Activated B cell treated with CpG ODN at 0.5 μM for 24 hours (primary cell): ENCODE measurements at regions of chr5 and their contacts with region 1.

Region 1: GRCh38 chr5:16616536-16617273 is at the start of gene RETREG1:
- DNase-seq: peak; percentile 67
- ATAC-seq: peak; percentile 85
- H3K4me3 Mint-ChIP-seq: peak within 1 kb of the TSS; percentile 84
- H3K27ac Mint-ChIP-seq: peak within 1 kb of the TSS; percentile 64
- H3K4me1 Mint-ChIP-seq: peaks cover 12% of the 10 kb centered on the region
- H3K27me3 Mint-ChIP-seq: peaks cover 17% of the 10 kb centered on the region
- CTCF ChIP-seq: no peak
- total RNA-seq, gene RETREG1: 3.3 and 3.5 TPM in 2 replicates

Region 2: GRCh38 chr5:16465544-16466466 is 150.9 kb before region 1 on chr5 and contains the start of gene ZNF622:
- CTCF ChIA-PET with region 1: no interaction called
- POLR2A ChIA-PET with region 1: interaction called, 3 read pairs
- intact Hi-C with region 1: loop called (anchors 1 kb)
- DNase-seq: peak; percentile 82
- ATAC-seq: peak; percentile 93
- H3K4me3 Mint-ChIP-seq: peak within 1 kb of the TSS; percentile 99
- H3K27ac Mint-ChIP-seq: peak within 1 kb of the TSS; percentile 95
- H3K4me1 Mint-ChIP-seq: peaks cover 78% of the 10 kb centered on the region
- H3K27me3 Mint-ChIP-seq: no peaks in the 10 kb centered on the region
- CTCF ChIP-seq: no peak
- total RNA-seq, gene ZNF622: 35.5 and 39.5 TPM in 2 replicates

Region 3: DNA sequence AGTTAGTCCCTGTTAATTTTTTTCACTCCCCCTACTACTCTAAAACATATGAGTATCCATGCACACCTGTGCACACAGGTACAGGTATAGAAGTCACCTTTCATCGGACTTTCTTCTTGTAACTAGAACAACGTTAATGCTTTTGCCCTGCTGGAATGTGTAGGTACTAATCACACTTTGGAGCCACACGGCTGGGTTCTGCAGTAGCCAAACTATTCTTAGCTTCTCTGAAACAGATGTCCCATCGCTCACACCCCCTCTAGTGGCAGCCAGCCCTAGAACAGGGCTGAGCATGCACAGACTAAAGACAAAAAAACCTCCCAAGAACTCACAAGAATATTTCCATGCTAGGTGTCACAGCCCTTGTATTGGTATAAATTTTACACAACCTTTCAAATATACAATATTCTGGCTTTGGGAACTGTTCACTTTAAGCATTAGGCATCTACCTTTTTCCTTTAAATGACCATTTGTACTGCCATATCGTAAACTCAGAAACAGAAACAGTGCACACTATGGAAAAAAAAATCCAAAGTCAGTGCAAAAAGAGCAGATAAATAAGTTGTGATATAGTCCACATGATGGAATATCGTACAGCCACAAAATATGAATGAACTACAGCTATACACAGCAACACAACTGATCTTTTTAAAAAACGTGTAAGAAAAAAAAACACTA is 63.9 kb before region 1 on chr5:
- CTCF ChIA-PET with region 1: no interaction called
- POLR2A ChIA-PET with region 1: interaction called, 4 read pairs
- intact Hi-C with region 1: loop called (anchors 2 kb)
- DNase-seq: no peak
- ATAC-seq: peak; percentile 79
- H3K4me3 Mint-ChIP-seq: no peak overlapping the region
- H3K27ac Mint-ChIP-seq: no peak overlapping the region
- H3K4me1 Mint-ChIP-seq: peaks cover 34% of the 10 kb centered on the region
- H3K27me3 Mint-ChIP-seq: no peaks in the 10 kb centered on the region
- CTCF ChIP-seq: no peak

Region 4: GRCh38 chr5:16600397-16600796 is 16.3 kb before region 1 on chr5:
- CTCF ChIA-PET with region 1: no interaction called
- POLR2A ChIA-PET with region 1: no interaction called
- intact Hi-C with region 1: no loop called
- DNase-seq: no peak
- ATAC-seq: no peak
- H3K4me3 Mint-ChIP-seq: no peak overlapping the region
- H3K27ac Mint-ChIP-seq: no peak overlapping the region
- H3K4me1 Mint-ChIP-seq: peaks cover 9% of the 10 kb centered on the region
- H3K27me3 Mint-ChIP-seq: peaks cover 5% of the 10 kb centered on the region
- CTCF ChIP-seq: no peak

Region 5: DNA sequence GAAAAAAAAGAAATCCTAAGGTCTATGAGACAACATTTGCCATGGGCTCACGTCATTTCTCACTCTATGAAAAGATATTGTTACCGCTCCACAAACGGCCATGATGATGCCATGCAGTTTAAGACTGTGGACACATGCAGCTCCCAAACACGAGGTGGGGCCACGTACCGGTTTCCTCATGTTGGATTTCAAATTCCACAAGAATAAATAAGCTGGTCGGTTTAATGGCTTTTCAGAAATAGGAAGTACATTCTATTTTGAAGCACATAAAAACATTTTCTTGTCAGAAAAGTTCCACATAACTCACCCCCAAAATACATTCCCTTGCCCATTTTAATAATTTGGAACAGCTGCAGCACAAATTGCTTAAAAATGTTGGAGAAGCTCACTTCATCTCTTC is 188.8 kb after region 1 on chr5:
- CTCF ChIA-PET with region 1: no interaction called
- POLR2A ChIA-PET with region 1: no interaction called
- intact Hi-C with region 1: no loop called
- DNase-seq: no peak
- ATAC-seq: no peak
- H3K4me3 Mint-ChIP-seq: no peak overlapping the region
- H3K27ac Mint-ChIP-seq: no peak overlapping the region
- H3K4me1 Mint-ChIP-seq: peaks cover 2% of the 10 kb centered on the region
- H3K27me3 Mint-ChIP-seq: no peaks in the 10 kb centered on the region
- CTCF ChIP-seq: no peak

Region 6: DNA sequence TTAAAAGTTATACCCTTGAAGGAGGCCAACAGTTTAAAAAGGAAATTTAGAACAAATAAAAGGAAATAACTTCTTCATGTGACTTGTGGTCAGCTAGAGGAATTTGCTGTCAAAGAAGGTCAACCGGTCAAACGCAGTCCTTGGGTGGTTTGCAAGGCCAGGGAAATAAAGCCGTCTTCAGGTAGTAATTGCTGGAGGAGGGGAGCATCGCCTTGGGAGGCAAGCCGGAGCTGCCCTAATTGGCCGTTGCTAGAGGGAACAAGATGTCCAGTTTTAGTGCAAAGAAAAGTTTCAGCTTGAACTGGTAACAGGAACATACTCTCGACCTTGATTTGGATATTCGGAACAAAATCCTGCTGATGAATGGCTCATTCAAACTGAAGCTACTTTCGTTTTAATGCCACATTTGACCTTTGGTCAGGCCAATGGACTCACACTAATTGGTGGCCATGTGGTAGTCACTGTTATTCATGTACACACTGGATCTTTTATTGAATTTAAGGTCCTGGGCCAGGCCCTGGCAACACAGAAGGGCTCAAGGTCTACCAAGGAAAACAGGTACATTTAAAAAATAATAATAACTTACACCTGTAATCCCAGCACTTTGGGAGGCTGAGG is 366.4 kb after region 1 on chr5:
- CTCF ChIA-PET with region 1: no interaction called
- POLR2A ChIA-PET with region 1: no interaction called
- intact Hi-C with region 1: no loop called
- DNase-seq: no peak
- ATAC-seq: no peak
- H3K4me3 Mint-ChIP-seq: no peak overlapping the region
- H3K27ac Mint-ChIP-seq: no peak overlapping the region
- H3K4me1 Mint-ChIP-seq: no peaks in the 10 kb centered on the region
- H3K27me3 Mint-ChIP-seq: no peaks in the 10 kb centered on the region
- CTCF ChIP-seq: no peak